Left colon (tissue), 2 donors: ENCODE measurements at regions of chrX and their contacts with region 1.

Region 1: DNA sequence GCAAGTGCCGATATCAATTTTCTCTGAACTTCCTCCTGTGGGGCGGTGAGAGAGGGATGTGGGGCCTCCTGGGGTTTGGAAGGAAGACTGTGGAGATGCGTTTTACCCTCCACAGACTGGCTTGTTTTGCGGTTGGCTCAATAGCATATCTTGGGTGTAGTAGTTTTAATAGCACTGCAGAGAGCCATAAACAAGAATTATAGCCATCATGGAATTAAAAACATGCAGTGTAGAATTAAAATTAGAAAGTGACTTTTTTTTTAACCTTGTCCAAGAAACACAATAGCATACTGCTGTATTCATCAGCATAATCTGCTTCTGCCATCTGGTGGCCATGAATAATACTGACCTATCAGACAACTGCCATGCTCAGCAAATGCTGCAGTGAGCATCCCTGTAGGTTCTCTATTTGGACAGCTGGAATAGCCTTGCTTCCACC is 47.3 kb upstream of the SCML1 start:
- DNase-seq: peak; percentile 30 to 34
- ATAC-seq: peak; percentile 93

Region 2: DNA sequence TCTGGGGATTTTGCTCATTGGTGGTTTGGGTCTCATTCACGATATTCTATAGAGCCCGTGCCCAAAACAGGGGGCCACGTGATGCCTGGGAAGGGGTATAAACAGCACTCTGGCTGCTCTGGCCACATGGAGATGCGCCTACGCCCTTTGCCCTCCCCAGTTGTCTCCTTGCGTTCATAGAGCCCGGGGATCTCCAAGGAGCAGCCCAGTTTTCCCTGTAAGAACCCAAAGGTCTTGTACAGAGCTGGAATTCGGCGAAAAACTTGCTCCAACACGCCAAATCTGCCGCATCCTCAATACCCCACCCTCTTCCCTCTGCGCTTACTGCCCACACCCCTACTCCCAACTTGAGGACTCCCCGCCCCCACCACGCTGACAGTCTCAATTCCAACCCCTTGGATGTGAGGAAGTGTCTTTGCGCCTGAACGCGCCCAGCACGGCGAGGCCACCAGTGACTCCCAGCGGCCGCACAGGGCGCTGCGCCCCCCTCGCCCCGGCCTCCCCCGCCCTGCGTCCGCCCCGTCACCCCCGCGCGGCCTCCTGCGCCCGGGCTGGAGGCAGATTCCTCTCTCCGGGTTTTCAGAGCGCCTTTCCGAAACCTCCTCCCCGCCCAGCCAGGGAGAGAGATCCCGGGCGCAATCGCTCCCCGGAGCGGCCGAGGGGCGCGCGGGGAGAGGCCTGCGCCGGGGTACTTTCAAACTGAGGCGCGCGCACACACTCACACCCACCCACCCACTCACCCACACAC is 315.2 kb before region 1 on chrX and contains the start of gene NHS:
- intact Hi-C with region 1: loop called in 1 of 2 experiments (anchors 10 kb)
- DNase-seq: peak; percentile 69 to 74
- ATAC-seq: peak; percentile 76
- total RNA-seq, gene NHS: 1.9 to 2.0 TPM